HCT116 (cell line): ENCODE measurements at regions of chr6 and their contacts with region 1.

Region 1: GRCh38 chr6:45714741-45715507 is 300.7 kb downstream of the CLIC5 start:
- DNase-seq: peak; percentile 73
- ATAC-seq: peak; percentile 98
- H3K4me3 ChIP-seq: no peak overlapping the region
- H3K27ac ChIP-seq: no peak overlapping the region
- H3K4me1 ChIP-seq: peaks cover 0 to 4% of the 10 kb centered on the region in 2 experiments; a peak in 2 of 4 replicates
- H3K27me3 ChIP-seq: no peaks in the 10 kb centered on the region
- CTCF ChIP-seq: peak; percentile 78 to 81 (median 80)
- POLR2A ChIP-seq: no peak
- RAD21 ChIP-seq: peak; percentile 93

Region 2: GRCh38 chr6:44630125-44631028 is 1084.5 kb before region 1 on chr6:
- CTCF ChIA-PET with region 1: interaction called, 32 read pairs
- POLR2A ChIA-PET with region 1: no interaction called
- RAD21 ChIA-PET with region 1: interaction called, 3 to 7 read pairs
- intact Hi-C with region 1: no loop called
- DNase-seq: peak; percentile 42
- ATAC-seq: peak; percentile 97
- H3K4me3 ChIP-seq: no peak overlapping the region
- H3K27ac ChIP-seq: no peak overlapping the region
- H3K4me1 ChIP-seq: peaks cover 0 to 7% of the 10 kb centered on the region in 2 experiments; a peak in 1 of 4 replicates
- H3K27me3 ChIP-seq: no peaks in the 10 kb centered on the region
- CTCF ChIP-seq: peak; percentile 64 to 77 (median 73); a peak in 5 of 6 replicates
- POLR2A ChIP-seq: no peak
- RAD21 ChIP-seq: peak; percentile 89

Region 3: DNA sequence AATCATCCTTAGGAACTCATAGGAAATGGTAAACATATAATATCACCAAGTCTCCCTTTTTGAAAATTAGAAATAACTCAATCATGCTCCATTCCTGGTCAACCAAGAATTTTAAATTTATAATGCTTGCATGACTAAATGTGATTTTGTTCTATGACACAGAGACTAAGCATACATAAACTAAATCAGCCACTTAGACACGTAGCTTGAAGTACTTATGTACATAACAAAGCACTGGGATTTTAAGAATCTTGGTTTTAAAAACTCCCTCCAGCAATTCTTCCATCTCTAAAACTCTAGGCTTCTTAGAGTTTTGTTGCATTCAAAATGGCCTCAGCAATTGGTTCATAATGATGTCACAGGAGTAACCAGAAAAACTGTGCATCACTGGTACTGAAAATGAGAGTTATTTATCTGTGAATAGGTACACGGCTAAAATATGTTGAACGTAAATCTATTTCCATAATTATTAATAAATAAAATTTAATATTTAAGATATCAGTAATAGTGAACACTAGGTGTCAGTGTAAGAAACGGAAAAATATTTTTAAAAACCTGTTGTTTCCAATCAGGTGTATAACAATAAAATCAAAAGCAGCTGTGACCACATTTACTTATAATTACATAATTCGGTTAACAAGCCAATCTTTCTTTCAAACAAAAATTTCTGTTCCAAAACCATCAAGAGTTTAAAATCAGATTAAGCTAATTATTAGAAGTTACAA is 628.4 kb before region 1 on chr6:
- CTCF ChIA-PET with region 1: interaction called, 8 read pairs
- POLR2A ChIA-PET with region 1: no interaction called
- RAD21 ChIA-PET with region 1: no interaction called
- intact Hi-C with region 1: loop called (anchors 2 kb)
- DNase-seq: no peak
- ATAC-seq: no peak
- H3K4me3 ChIP-seq: no peak overlapping the region
- H3K27ac ChIP-seq: no peak overlapping the region
- H3K4me1 ChIP-seq: no peaks in the 10 kb centered on the region
- H3K27me3 ChIP-seq: no peaks in the 10 kb centered on the region
- CTCF ChIP-seq: no peak
- POLR2A ChIP-seq: no peak
- RAD21 ChIP-seq: peak; percentile 42

Region 4: GRCh38 chr6:45421709-45422502 is 293.0 kb before region 1 on chr6:
- CTCF ChIA-PET with region 1: interaction called, 18 read pairs
- POLR2A ChIA-PET with region 1: no interaction called
- RAD21 ChIA-PET with region 1: interaction called, 3 to 8 read pairs
- intact Hi-C with region 1: loop called (anchors 1 kb)
- DNase-seq: no peak
- ATAC-seq: peak; percentile 64
- H3K4me3 ChIP-seq: peak overlapping the region; percentile 53 to 73
- H3K27ac ChIP-seq: peak overlapping the region; percentile 33; the same call in 1 of the 2 replicates
- H3K4me1 ChIP-seq: peaks cover 8 to 36% of the 10 kb centered on the region in 2 experiments
- H3K27me3 ChIP-seq: peaks cover 18% of the 10 kb centered on the region
- CTCF ChIP-seq: peak in 2 of 3 experiments; percentile 14 to 15; a peak in 2 of 6 replicates
- POLR2A ChIP-seq: no peak
- RAD21 ChIP-seq: peak; percentile 41

Region 5: GRCh38 chr6:45922728-45923351 is 207.9 kb after region 1 on chr6:
- CTCF ChIA-PET with region 1: interaction called, 11 read pairs
- POLR2A ChIA-PET with region 1: no interaction called
- RAD21 ChIA-PET with region 1: interaction called in 1 of 2 experiments, 5 read pairs
- intact Hi-C with region 1: loop called (anchors 5 kb)
- DNase-seq: peak; percentile 52
- ATAC-seq: peak; percentile 93
- H3K4me3 ChIP-seq: no peak overlapping the region
- H3K27ac ChIP-seq: no peak overlapping the region
- H3K4me1 ChIP-seq: no peaks in the 10 kb centered on the region
- H3K27me3 ChIP-seq: no peaks in the 10 kb centered on the region
- CTCF ChIP-seq: peak; percentile 67 to 88 (median 81)
- POLR2A ChIP-seq: no peak
- RAD21 ChIP-seq: peak; percentile 95